PC-3 (cell line): ENCODE measurements at regions of chr15 and their contacts with region 1.

Region 1: DNA sequence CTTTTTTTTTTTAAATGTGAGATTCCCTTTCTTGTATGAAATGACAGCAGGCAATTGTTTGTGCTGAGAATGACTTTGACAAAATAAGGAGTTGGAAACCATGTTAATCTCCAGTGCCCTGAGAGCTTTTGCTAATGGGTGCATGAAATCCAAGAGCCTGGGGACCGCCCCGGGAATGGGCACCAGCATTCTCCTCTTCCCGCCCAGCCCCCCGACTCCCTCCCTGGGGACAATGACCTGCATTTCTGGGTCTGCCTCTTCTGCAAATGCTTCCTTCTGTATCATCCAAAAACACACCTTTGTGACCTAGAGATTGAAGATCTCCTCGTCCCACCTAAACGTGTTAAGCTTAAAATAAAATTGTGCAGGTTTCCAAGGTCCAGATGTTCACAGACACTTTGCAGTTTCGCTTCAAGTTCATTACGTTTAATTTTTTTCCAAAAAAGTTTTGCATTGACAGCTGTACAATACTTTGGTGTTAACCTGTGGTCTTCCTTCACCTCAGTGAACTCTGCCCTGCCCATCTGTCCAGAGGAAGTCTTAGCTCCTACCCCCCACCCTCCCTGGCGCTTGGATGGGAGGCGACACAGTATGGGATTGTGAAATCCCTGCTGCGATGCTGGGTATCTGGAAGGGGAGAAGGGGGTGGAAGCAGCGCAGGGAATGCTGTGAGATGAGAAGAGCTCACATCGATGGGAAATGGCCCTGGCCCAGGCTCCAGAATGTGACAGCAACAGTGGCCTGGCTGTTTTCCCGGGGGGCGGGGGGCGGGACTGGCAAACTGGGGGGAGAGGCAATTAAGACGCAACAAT is 50.1 kb downstream of the TLE3 start:
- DNase-seq: no peak
- ATAC-seq: no peak
- H3K4me3 ChIP-seq: no peak overlapping the region
- H3K27ac ChIP-seq: no peak overlapping the region
- H3K4me1 ChIP-seq: 0 out of 2 replicates have a peak, but pooled peaks cover 7% of the 10 kb centered on the region
- H3K27me3 ChIP-seq: no peaks in the 10 kb centered on the region
- CTCF ChIP-seq: no peak

Region 2: GRCh38 chr15:71916834-71917233 is 1869.2 kb after region 1 on chr15:
- CTCF ChIA-PET with region 1: no interaction called
- POLR2A ChIA-PET with region 1: interaction called, 16 read pairs
- intact Hi-C with region 1: no loop called
- DNase-seq: no peak
- ATAC-seq: no peak
- H3K4me3 ChIP-seq: no peak overlapping the region
- H3K27ac ChIP-seq: no peak overlapping the region
- H3K4me1 ChIP-seq: no peaks in the 10 kb centered on the region
- H3K27me3 ChIP-seq: no peaks in the 10 kb centered on the region
- CTCF ChIP-seq: no peak